ENCODE measurements at regions of chrX and their contacts with region 1.

Region 1: GRCh38 chrX:9341291-9342201 is 123.3 kb upstream of the TBL1X start:
- DNase-seq: peak in 1 of 2 donors; percentile 85
- H3K4me3 ChIP-seq: peak overlapping the region; percentile 55 to 68
- H3K27ac ChIP-seq: peak overlapping the region; percentile 88 to 90
- H3K4me1 ChIP-seq: peaks cover 10 to 33% of the 10 kb centered on the region in 2 donors
- H3K27me3 ChIP-seq: no peaks in the 10 kb centered on the region
- CTCF ChIP-seq: no peak

Region 2: GRCh38 chrX:8868906-8869305 is 472.6 kb before region 1 on chrX:
- intact Hi-C with region 1: loop called (anchors 10 kb)
- DNase-seq: no peak
- H3K4me3 ChIP-seq: no peak overlapping the region
- H3K27ac ChIP-seq: no peak overlapping the region
- H3K4me1 ChIP-seq: peaks cover 0 to 14% of the 10 kb centered on the region in 2 donors
- H3K27me3 ChIP-seq: no peaks in the 10 kb centered on the region
- CTCF ChIP-seq: peak in 2 of 3 experiments; percentile 29 to 45

Region 3: GRCh38 chrX:8913655-8914409 is 427.7 kb before region 1 on chrX:
- intact Hi-C with region 1: loop called (anchors 5 kb)
- DNase-seq: peak in 1 of 2 donors; percentile 73
- H3K4me3 ChIP-seq: peak overlapping the region in 1 of 2 donors; percentile 32
- H3K27ac ChIP-seq: peak overlapping the region; percentile 54 to 70
- H3K4me1 ChIP-seq: peaks cover 3 to 15% of the 10 kb centered on the region in 2 donors
- H3K27me3 ChIP-seq: no peaks in the 10 kb centered on the region
- CTCF ChIP-seq: no peak

Region 4: GRCh38 chrX:9475984-9476383 is 134.4 kb after region 1 on chrX:
- intact Hi-C with region 1: no loop called
- DNase-seq: no peak
- H3K4me3 ChIP-seq: no peak overlapping the region
- H3K27ac ChIP-seq: no peak overlapping the region
- H3K4me1 ChIP-seq: peaks cover 0 to 3% of the 10 kb centered on the region in 2 donors
- H3K27me3 ChIP-seq: no peaks in the 10 kb centered on the region
- CTCF ChIP-seq: no peak

Region 5: DNA sequence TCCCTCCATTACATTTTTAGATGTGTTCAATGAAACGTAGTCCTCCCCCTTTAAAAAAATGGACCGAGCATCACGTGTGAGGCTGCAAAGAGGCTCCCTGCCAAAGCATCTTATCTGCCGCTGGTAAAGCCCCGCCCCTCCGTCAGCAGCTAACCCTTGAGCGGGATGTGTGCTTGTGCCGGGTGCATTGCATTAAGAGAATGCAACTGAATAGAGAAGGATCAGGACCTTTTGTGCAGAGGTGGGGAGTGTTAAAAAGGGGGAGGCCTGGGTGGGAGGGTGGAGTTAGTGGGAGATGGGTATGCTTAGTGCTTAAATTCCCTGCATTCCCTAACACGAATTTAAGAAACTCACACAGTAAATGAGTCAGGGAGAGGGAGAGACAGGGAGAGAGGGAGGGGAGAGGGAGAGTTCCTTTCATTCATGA is 189.3 kb after region 1 on chrX:
- intact Hi-C with region 1: loop called (anchors 2 kb)
- DNase-seq: peak in 1 of 2 donors; percentile 79
- H3K4me3 ChIP-seq: no peak overlapping the region
- H3K27ac ChIP-seq: no peak overlapping the region
- H3K4me1 ChIP-seq: peaks cover 3 to 14% of the 10 kb centered on the region in 2 donors
- H3K27me3 ChIP-seq: no peaks in the 10 kb centered on the region
- CTCF ChIP-seq: no peak